Right lobe of liver (tissue), 6 donors: ENCODE measurements at regions of chr18 and their contacts with region 1.

Region 1: GRCh38 chr18:3261371-3262246 is at the start of gene MYL12B:
- DNase-seq: peak; percentile 87 to 88 (median 87)
- ATAC-seq: peak; percentile 65 to 90 (median 84)
- H3K4me3 ChIP-seq: peak within 1 kb of the TSS; percentile 63 to 86 (median 78)
- H3K27ac ChIP-seq: peak within 1 kb of the TSS; percentile 97 to 99 (median 99)
- H3K4me1 ChIP-seq: peaks cover 0 to 46% (median 9%) of the 10 kb centered on the region in 4 donors
- H3K27me3 ChIP-seq: no peaks in the 10 kb centered on the region
- CTCF ChIP-seq: peak in 2 of 4 donors; percentile 7 to 12
- POLR2A ChIP-seq: peak; percentile 83
- total RNA-seq, gene MYL12B: 113 to 281 (median 185) TPM

Region 2: DNA sequence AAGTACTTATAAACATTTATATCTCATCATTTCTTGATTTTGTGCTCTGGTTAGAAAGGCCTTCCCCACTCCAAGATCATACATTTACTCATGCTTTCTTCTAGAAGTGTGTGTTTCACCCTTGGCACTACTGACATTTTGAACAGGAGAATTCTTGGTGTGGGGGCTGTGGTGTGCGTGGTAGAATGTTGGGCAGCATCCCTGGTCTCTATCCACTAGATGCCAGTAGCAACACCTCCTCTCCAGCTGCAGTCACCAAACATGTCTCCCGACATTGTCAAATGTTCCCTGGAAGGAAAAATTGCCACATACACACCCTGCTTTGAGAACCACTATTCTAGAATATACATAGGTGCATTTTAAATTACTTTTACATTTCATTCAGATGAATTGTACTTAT is 179.7 kb after region 1 on chr18:
- intact Hi-C with region 1: loop called in 1 of 2 experiments (anchors 5 kb)
- DNase-seq: peak in 1 of 3 donors; percentile 53
- ATAC-seq: peak; percentile 92 to 97 (median 94)
- H3K4me3 ChIP-seq: no peak overlapping the region
- H3K27ac ChIP-seq: peak overlapping the region in 1 of 3 donors; percentile 54
- H3K4me1 ChIP-seq: peaks cover 0 to 11% (median 3%) of the 10 kb centered on the region in 4 donors
- H3K27me3 ChIP-seq: no peaks in the 10 kb centered on the region
- CTCF ChIP-seq: peak; percentile 41 to 53 (median 50)
- POLR2A ChIP-seq: no peak